Right ventricle myocardium inferior (tissue), 1 donor: ENCODE measurements at regions of chr10 and their contacts with region 1.

Region 1: GRCh38 chr10:67779465-67780203 is 58.4 kb downstream of the DNAJC12 start:
- DNase-seq: no peak
- ATAC-seq: peak; percentile 75

Region 2: DNA sequence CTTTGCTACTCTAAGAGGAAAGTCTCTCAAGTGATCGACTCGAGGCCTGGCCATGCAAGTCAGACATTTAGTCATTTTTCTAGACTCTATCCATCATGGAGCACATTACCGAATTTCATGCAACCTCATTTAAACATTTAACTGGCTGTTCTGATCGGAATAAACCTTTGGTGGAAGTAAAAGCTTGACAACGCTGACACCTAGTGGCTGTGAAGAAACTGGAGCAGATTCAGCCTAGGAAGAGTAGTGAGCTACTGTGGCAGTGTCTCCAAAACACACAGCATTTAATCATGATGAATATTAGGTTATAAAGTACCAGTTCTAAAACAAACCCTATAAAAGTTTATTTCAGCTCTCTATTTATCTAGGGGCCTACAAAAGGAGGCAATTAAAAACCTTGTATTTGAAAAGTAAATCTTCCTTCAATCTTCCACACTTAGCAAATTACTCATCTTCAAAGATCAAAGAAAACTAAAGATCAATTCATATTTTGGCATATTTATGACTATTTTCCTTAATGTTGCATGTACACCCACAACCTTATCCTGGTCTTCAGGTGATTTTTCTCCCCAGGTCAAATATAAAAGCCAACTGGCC is 258.6 kb before region 1 on chr10:
- intact Hi-C with region 1: loop called (anchors 10 kb)
- DNase-seq: no peak
- ATAC-seq: peak; percentile 80

Region 3: GRCh38 chr10:67629461-67629971 is 150.1 kb before region 1 on chr10:
- intact Hi-C with region 1: no loop called
- DNase-seq: no peak
- ATAC-seq: no peak

Region 4: DNA sequence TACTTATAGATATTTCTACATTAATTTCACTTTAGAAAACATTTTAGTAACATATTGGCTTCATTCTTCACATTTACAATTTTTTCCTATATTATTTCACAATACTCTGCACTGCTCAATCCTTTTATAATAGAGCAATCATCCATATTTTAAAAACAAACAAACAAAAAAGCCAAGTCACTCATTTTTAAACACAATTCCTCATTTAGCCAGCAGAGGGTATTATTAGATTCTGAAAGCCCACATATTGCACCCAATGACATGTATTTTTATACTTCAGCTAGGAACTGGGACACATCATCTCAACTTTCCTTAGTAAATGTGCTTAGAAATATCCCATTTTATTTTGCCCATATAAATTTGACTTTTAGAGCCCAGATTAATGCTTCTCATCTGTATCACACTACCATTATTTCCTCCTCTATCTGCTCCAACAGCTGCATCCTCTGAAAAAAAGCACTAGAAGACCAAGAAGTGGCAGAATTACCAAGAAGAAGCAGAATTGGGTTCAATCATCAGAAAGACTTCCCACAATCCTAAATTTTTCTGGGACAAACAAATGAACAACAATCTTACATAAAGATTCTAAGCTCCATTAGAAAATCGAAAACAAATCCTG is 113.1 kb before region 1 on chr10:
- intact Hi-C with region 1: loop called (anchors 1 kb)
- DNase-seq: no peak
- ATAC-seq: peak; percentile 45

Region 5: DNA sequence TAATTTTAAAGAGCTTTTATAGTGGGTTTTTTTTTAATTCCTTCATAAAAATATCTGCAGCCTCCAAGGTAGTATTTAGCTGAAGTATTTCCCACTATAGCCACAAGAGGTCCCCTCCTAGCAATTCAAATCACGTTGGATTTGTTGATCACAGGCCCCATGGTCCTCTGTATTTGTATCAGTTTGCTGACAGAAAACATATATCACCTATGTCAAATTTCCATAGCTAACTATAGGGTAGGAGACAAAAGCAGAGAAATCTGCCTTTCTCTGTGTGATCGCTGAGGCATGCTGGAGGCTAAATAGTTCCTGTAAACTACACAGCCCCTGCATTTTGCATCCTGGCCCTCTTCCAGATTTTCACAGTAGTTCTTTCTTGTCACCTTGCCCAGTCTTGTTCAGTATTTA is 81.9 kb before region 1 on chr10:
- intact Hi-C with region 1: loop called (anchors 2 kb)
- DNase-seq: no peak
- ATAC-seq: peak; percentile 51